MCF 10A (cell line): ENCODE measurements at regions of chr6 and their contacts with region 1.

Region 1: DNA sequence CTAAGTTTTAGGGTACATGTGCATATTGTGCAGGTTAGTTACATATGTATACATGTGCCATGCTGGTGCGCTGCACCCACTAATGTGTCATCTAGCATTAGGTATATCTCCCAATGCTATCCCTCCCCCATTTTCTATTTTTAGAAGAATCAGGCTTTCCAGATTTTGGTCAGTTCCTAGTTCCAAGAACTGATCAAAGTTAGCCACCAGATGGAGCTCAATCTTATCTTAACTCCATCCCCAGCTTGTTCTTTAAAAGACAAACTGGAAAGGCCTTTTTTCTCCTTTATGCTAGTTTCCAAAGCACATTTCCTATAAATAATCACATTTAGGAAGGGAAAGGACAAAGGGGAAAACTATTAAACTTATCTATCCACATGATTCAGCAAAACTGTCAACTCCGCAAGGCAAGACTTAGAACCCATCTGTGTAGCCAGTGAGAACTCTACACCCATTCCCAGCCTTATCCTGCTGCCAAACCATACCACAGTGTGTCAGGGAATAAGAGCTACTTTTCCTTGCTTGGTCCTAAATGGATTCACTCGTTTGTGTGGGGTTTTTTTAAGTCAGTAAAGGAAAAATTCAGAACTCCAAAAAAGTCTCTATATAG is 22.8 kb upstream of the KHDC1 start:
- DNase-seq: peak; percentile 63
- H3K4me3 Mint-ChIP-seq: no peak overlapping the region
- H3K27ac Mint-ChIP-seq: no peak overlapping the region
- H3K4me1 Mint-ChIP-seq: peaks cover 6% of the 10 kb centered on the region
- H3K27me3 Mint-ChIP-seq: no peaks in the 10 kb centered on the region
- CTCF ChIP-seq: peak; percentile 35

Region 2: DNA sequence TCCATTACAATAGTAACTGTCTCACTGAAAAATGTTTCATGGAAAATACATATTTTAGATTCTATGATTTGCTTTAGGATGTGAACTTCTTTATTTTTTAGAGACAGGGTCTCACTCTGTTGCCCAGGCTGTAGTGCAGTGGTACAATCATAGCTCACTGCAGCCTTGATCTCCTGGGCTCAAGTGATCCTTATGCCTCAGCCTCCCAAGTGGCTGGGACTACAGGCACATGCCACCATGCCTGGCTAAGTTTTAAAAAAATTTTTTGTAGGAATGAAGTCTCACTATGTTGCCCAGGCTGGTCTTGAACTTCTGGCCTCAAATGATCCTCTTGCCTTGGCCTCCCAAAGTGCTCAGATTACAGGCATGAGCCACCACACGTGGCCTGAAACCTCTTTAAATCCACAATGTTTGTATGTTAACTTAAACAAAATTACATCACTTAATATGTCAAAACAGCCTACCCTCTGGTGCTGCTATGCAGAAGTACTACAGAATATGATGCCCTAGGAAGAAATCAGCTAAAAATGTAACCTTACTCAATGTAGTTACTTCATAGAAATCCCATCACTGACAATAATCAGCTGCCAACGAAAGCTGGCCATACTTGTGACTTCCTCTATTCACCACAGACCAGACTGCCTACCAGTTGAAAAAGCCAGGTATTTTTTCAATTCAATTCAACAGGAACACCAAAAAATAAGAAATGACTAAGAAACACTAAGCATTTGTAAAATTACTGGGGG is 217.4 kb after region 1 on chr6:
- CTCF ChIA-PET with region 1: no interaction called
- POLR2A ChIA-PET with region 1: no interaction called
- intact Hi-C with region 1: loop called (anchors 10 kb)
- DNase-seq: no peak
- H3K4me3 Mint-ChIP-seq: no peak overlapping the region
- H3K27ac Mint-ChIP-seq: no peak overlapping the region
- H3K4me1 Mint-ChIP-seq: no peaks in the 10 kb centered on the region
- H3K27me3 Mint-ChIP-seq: no peaks in the 10 kb centered on the region
- CTCF ChIP-seq: no peak